Natural killer cell (primary cell): ENCODE measurements at regions of chr1 and their contacts with region 1.

Region 1: GRCh38 chr1:152047730-152048402 is 11.1 kb upstream of the S100A11 start:
- DNase-seq: peak; percentile 80 to 91
- ATAC-seq: peak; percentile 89 to 95 (median 91)
- H3K4me3 ChIP-seq: peak overlapping the region; percentile 14
- H3K4me3 Mint-ChIP-seq: peak overlapping the region; percentile 86
- H3K27ac ChIP-seq: peak overlapping the region; percentile 94
- H3K27ac Mint-ChIP-seq: peak overlapping the region; percentile 95 to 97
- H3K4me1 ChIP-seq: peaks cover 29% of the 10 kb centered on the region
- H3K4me1 Mint-ChIP-seq: peaks cover 16 to 20% of the 10 kb centered on the region in 2 donors
- H3K27me3 ChIP-seq: no peaks in the 10 kb centered on the region
- H3K27me3 Mint-ChIP-seq: no peaks in the 10 kb centered on the region
- CTCF ChIP-seq: peak; percentile 53

Region 2: GRCh38 chr1:151945725-151946364 is 102.0 kb before region 1 on chr1:
- intact Hi-C with region 1: loop called (anchors 5 kb)
- DNase-seq: peak; percentile 79 to 94
- ATAC-seq: peak; percentile 67 to 89 (median 87)
- H3K4me3 ChIP-seq: no peak overlapping the region
- H3K4me3 Mint-ChIP-seq: peak overlapping the region; percentile 86
- H3K27ac ChIP-seq: peak overlapping the region; percentile 93
- H3K27ac Mint-ChIP-seq: peak overlapping the region; percentile 89 to 95
- H3K4me1 ChIP-seq: peaks cover 22% of the 10 kb centered on the region
- H3K4me1 Mint-ChIP-seq: peaks cover 23 to 43% of the 10 kb centered on the region in 2 donors
- H3K27me3 ChIP-seq: no peaks in the 10 kb centered on the region
- H3K27me3 Mint-ChIP-seq: peaks cover 0 to 3% of the 10 kb centered on the region in 2 donors
- CTCF ChIP-seq: no peak

Region 3: DNA sequence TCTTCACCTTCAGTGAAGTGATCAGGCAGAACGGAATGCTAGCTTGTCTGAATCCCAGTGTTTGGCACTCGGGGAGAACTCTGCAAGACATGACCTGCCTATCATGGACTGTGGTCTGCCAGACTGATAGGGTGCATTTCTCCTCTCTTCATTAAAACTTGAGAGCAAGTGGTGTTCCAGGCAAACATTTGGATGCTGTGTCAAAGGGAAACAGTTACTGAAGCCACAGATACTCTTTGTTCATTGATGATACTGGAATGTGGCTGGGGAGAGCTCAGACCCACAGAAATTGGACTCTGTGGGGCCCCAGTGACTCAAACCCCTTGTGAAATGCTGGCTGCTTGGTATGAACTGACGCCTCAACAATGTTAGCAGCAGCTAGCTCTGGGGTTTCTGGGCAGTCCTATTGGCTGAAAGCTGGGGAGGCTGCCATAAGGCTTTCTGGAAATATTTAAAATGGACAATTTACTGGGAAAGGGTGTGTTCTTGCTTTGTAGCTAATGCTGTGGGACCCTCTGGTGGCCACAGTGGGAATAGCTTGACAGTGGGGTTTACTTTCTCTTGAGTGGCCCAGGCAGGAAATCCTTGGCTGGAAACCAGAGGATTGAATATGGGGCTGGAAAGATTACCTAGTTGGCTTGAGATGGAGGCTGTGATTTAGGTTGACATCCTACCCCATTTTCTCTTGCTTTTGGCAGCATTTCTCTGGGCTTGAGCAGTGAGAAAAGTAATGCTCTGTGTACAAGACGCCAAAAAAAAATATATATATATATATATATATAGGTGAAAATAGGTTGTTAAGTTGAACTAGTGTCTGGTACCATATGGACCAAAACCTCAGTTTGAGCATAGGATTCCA is 46.2 kb before region 1 on chr1:
- intact Hi-C with region 1: no loop called
- DNase-seq: peak; percentile 67 to 88
- ATAC-seq: peak; percentile 72 to 85 (median 83)
- H3K4me3 ChIP-seq: no peak overlapping the region
- H3K4me3 Mint-ChIP-seq: no peak overlapping the region
- H3K27ac ChIP-seq: no peak overlapping the region
- H3K27ac Mint-ChIP-seq: no peak overlapping the region
- H3K4me1 ChIP-seq: peaks cover 7% of the 10 kb centered on the region
- H3K4me1 Mint-ChIP-seq: no peaks in the 10 kb centered on the region
- H3K27me3 ChIP-seq: peaks cover 2% of the 10 kb centered on the region
- H3K27me3 Mint-ChIP-seq: peaks cover 12 to 15% of the 10 kb centered on the region in 2 donors
- CTCF ChIP-seq: peak; percentile 96

Region 4: GRCh38 chr1:152036267-152037216 is 11.3 kb before region 1 on chr1 and contains the start of gene S100A11:
- intact Hi-C with region 1: loop called (anchors 1 kb)
- DNase-seq: peak; percentile 63 to 75
- ATAC-seq: peak; percentile 69 to 79 (median 70)
- H3K4me3 ChIP-seq: peak within 1 kb of the TSS; percentile 91
- H3K4me3 Mint-ChIP-seq: peak within 1 kb of the TSS; percentile 96
- H3K27ac ChIP-seq: peak within 1 kb of the TSS; percentile 84
- H3K27ac Mint-ChIP-seq: peak within 1 kb of the TSS; percentile 79 to 92
- H3K4me1 ChIP-seq: peaks cover 33% of the 10 kb centered on the region
- H3K4me1 Mint-ChIP-seq: peaks cover 23 to 25% of the 10 kb centered on the region in 2 donors
- H3K27me3 ChIP-seq: no peaks in the 10 kb centered on the region
- H3K27me3 Mint-ChIP-seq: no peaks in the 10 kb centered on the region
- CTCF ChIP-seq: no peak
- total RNA-seq, gene S100A11: 70.5 to 114 (median 88.9) TPM

Region 5: GRCh38 chr1:152189657-152190442 is 142.0 kb after region 1 on chr1:
- intact Hi-C with region 1: loop called (anchors 1 kb)
- DNase-seq: peak; percentile 45 to 83
- ATAC-seq: peak; percentile 64 to 73 (median 68)
- H3K4me3 ChIP-seq: peak overlapping the region; percentile 72
- H3K4me3 Mint-ChIP-seq: peak overlapping the region; percentile 84
- H3K27ac ChIP-seq: no peak overlapping the region
- H3K27ac Mint-ChIP-seq: peak overlapping the region in 1 of 2 donors; percentile 81
- H3K4me1 ChIP-seq: peaks cover 15% of the 10 kb centered on the region
- H3K4me1 Mint-ChIP-seq: peaks cover 6 to 14% of the 10 kb centered on the region in 2 donors
- H3K27me3 ChIP-seq: no peaks in the 10 kb centered on the region
- H3K27me3 Mint-ChIP-seq: peaks cover 0 to 9% of the 10 kb centered on the region in 2 donors
- CTCF ChIP-seq: peak; percentile 81

Region 6: DNA sequence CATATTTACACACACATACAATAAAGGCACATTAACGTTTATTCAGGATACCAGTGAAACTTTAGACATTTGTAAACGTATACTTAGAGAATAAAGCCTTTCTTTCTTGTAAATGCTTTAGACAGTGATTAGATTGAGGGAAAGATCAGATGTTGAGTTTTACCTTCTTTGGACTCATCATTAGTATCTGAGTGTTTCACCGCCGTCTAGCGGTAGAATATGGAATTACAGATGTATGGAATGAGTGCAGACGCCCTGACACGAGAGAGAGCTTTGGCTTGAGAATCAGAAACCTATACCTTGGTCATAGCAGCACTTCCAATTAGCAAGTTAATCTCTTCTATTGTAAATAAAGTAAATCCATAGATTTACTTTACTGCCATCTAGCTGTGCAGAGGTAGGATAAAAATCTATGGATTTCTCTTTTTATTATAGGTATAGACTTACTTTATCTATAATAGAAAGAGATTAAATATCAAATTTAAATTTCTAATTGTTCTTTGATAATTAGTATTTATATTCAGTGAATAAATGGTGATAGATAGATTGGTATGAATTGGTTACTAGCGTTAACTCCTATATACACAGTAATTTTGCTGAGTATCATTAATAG is 299.4 kb after region 1 on chr1:
- intact Hi-C with region 1: loop called (anchors 1 kb)
- DNase-seq: peak in 1 of 2 donors; percentile 80
- ATAC-seq: peak; percentile 66 to 80 (median 76)
- H3K4me3 ChIP-seq: no peak overlapping the region
- H3K4me3 Mint-ChIP-seq: no peak overlapping the region
- H3K27ac ChIP-seq: no peak overlapping the region
- H3K27ac Mint-ChIP-seq: no peak overlapping the region
- H3K4me1 ChIP-seq: no peaks in the 10 kb centered on the region
- H3K4me1 Mint-ChIP-seq: no peaks in the 10 kb centered on the region
- H3K27me3 ChIP-seq: peaks cover 10% of the 10 kb centered on the region
- H3K27me3 Mint-ChIP-seq: peaks cover 6 to 45% of the 10 kb centered on the region in 2 donors
- CTCF ChIP-seq: peak; percentile 96

Region 7: DNA sequence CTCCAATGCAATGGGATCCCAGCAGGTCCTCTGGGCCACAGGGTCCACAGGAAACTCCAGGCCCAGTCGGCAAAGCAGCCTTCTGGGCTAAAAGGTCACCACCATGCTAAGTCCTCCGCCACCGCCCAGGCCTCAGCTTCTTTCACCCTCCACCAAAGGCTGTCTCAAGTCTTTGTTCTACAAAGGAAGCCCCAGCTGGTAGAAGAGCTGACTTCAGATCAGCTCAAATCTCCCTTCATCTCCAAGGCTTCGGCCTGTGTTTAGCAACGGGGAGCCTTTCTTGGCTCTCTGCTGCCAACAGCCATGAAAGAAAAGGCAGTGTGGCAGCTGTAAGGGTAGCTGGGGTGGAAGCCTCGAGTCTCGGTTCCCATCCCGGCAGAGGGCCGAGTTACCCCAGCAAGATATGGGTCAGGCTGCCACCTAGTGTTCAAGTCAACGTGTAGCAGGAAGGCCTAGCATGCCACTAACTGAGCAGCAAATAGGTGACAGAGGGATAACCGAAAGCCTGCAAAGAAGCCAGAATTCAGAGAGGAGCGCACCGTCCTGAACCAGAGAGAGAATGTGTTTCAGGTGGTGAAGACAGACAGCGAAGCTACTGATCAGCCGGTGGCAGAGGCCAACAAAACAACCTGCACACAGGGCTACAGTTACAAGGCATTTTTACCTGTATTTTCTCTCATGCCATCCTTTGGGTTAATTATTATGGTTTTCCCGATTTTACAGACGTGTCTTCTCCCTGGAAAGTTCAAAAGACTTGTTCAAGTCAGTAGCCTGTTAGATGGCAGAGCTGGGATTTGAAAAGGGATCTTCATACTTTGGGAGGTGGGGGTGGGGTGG is 393.0 kb after region 1 on chr1:
- intact Hi-C with region 1: loop called (anchors 5 kb)
- DNase-seq: peak; percentile 47 to 85
- ATAC-seq: peak; percentile 87 to 100 (median 99)
- H3K4me3 ChIP-seq: no peak overlapping the region
- H3K4me3 Mint-ChIP-seq: no peak overlapping the region
- H3K27ac ChIP-seq: no peak overlapping the region
- H3K27ac Mint-ChIP-seq: no peak overlapping the region
- H3K4me1 ChIP-seq: peaks cover 5% of the 10 kb centered on the region
- H3K4me1 Mint-ChIP-seq: no peaks in the 10 kb centered on the region
- H3K27me3 ChIP-seq: peaks cover 5% of the 10 kb centered on the region
- H3K27me3 Mint-ChIP-seq: peaks cover 29 to 35% of the 10 kb centered on the region in 2 donors
- CTCF ChIP-seq: peak; percentile 85

Region 8: GRCh38 chr1:152459596-152460528 is 412.0 kb after region 1 on chr1:
- intact Hi-C with region 1: loop called (anchors 1 kb)
- DNase-seq: peak; percentile 67 to 89
- ATAC-seq: peak; percentile 71 to 75 (median 74)
- H3K4me3 ChIP-seq: no peak overlapping the region
- H3K4me3 Mint-ChIP-seq: peak overlapping the region; percentile 83
- H3K27ac ChIP-seq: peak overlapping the region; percentile 71
- H3K27ac Mint-ChIP-seq: peak overlapping the region; percentile 94 to 95
- H3K4me1 ChIP-seq: peaks cover 13% of the 10 kb centered on the region
- H3K4me1 Mint-ChIP-seq: peaks cover 26 to 33% of the 10 kb centered on the region in 2 donors
- H3K27me3 ChIP-seq: no peaks in the 10 kb centered on the region
- H3K27me3 Mint-ChIP-seq: peaks cover 3 to 5% of the 10 kb centered on the region in 2 donors
- CTCF ChIP-seq: peak; percentile 80

Region 9: DNA sequence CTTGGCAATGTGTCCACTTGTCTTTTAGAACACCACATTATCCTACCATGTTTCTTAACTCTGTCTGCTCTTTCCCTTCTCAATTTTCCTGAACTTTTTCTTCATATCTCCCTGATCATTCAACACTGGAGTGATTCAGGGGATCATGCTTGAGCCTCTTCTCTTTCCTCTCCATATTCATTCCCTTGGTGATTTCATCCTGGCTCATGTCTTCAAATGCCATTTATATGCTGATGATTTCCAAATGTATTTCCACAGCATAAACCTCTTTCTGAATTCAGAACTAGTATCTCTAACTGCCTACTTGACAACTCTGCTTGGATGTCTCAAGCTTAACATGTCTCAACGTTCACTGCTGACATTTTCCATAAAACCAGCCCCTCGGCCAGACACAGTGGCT is 852.0 kb after region 1 on chr1:
- intact Hi-C with region 1: no loop called
- DNase-seq: no peak
- ATAC-seq: no peak
- H3K4me3 ChIP-seq: no peak overlapping the region
- H3K4me3 Mint-ChIP-seq: no peak overlapping the region
- H3K27ac ChIP-seq: no peak overlapping the region
- H3K27ac Mint-ChIP-seq: no peak overlapping the region
- H3K4me1 ChIP-seq: no peaks in the 10 kb centered on the region
- H3K4me1 Mint-ChIP-seq: no peaks in the 10 kb centered on the region
- H3K27me3 ChIP-seq: peaks cover 4% of the 10 kb centered on the region
- H3K27me3 Mint-ChIP-seq: peaks cover 18 to 27% of the 10 kb centered on the region in 2 donors
- CTCF ChIP-seq: no peak